ENCODE measurements at regions of chr5 and their contacts with region 1.

Region 1: DNA sequence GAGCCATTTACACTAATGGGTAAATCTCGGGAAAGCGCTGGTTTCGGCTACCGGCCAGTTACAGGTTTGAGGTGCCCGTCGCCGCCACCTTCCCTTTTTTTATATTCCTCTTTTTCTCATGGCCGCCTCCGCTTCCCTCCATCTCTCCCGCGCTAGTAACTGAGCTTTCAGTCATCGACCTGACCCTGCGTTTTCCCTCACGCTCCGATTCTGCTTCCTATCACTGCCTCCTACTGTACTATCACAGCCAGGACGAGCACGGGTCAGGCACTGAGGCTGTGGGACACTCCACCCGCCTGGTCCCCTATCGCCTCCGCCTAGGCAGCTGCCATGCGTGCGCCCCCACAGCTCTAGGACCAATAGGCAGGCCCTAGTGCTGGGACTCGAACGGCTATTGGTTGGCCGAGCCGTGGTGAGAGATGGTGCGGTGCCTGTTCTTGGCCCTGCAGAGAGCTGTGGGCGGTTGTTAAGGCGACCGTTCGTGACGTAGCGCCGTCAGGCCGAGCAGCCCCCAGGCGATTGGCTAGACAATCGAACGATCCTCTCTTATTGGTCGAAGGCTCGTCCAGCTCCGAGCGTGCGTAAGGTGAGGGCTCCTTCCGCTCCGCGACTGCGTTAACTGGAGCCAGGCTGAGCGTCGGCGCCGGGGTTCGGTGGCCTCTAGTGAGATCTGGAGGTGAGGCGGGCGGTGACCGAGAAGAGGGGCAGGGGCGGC is at the start of gene HMGCR:
- H3K4me3 Mint-ChIP-seq: no peak within 1 kb of the TSS
- H3K27ac Mint-ChIP-seq: no peak within 1 kb of the TSS
- H3K4me1 Mint-ChIP-seq: peaks cover 43% of the 10 kb centered on the region
- H3K27me3 Mint-ChIP-seq: no peaks in the 10 kb centered on the region

Region 2: DNA sequence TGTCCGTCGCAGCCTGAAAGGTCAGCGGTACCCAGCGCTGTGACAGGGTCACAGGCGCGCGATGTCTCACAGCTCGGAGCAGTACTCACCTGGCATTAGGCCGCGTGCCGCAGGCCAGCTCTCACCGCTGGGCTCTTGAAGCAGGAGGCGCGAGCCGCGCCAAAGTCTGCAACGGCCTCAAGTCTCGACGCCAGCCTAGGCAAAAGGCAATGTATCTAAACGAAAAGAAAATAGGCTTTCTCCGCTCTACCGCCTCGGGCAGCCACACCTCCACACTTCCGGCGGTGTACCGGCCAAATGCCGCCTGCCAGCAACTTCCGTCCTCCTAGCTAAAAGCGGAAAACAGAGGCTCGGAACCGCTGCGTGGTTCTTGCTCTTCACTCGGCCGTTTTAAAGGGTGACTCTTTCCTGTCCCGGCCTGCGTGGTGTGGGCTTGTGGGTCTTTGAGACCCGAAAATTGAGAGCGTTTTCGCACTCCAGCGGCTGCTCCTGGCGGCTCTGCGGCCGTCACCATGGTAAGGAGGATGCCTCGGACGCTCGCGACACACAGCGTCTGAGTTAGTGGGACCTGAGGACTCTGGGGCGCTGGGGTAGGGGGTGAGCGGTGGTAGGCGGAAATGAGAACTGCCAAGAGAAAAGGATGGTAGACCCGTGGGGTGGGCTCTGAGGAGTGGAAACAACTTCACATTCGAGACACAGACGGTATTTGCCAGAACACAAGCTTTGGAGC is 569.8 kb before region 1 on chr5 and contains the starts of genes GFM2 and NSA2:
- intact Hi-C with region 1: loop called (anchors 10 kb)
- H3K4me3 Mint-ChIP-seq: peak within 1 kb of the TSS; percentile 100
- H3K27ac Mint-ChIP-seq: peak within 1 kb of the TSS; percentile 93
- H3K4me1 Mint-ChIP-seq: peaks cover 30% of the 10 kb centered on the region
- H3K27me3 Mint-ChIP-seq: no peaks in the 10 kb centered on the region

Region 3: GRCh38 chr5:74919487-74919886 is 417.3 kb before region 1 on chr5:
- intact Hi-C with region 1: no loop called
- H3K4me3 Mint-ChIP-seq: no peak overlapping the region
- H3K27ac Mint-ChIP-seq: no peak overlapping the region
- H3K4me1 Mint-ChIP-seq: no peaks in the 10 kb centered on the region
- H3K27me3 Mint-ChIP-seq: peaks cover 2% of the 10 kb centered on the region

Region 4: DNA sequence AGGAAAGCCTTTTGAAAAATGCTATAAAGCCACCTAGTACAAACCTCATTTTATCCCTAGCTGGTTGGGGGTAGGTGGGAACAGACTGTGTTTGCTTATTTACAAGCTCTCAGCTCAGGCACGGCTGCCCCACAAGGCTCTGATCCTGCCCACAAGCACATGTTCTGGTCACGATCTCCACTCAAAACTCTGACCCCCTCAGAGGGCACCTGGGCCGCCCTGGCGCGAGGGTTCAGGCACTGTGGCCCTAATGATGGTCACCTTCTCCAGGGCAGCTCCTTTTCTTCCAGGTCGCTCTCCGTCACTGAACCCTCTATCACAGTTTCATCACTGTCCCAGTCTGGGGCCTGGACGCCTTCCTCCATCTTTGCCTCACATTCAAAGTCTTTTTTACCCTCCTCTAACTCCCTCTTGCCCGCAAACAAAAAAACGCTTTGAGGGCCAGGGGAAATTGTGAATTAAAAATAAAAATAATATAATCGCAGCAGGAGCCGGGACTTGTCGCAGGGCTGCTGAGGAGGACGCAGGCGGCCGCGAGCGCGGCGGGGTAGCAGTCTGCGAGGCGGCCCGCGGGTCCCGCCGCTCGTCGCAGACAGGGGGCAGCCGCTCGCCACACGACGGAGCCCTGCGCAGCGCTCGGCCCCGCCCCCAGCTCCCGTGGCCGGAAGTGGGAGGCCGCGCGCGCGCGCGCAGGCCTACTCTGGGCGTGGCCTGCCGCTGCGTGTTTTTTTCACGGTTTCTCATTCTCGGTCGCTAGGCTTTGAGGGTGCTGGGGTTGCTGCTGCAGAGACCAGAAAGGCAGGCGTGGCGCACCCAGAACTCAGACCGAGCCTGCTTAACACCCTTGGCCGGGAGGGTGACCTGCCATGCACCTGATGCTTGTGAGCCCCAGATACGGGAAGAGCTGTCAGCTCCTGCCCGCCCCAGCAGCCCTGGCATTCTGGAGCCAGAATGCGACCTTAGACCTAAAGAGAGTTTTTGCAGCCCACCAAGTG is 100.2 kb before region 1 on chr5 and contains the start of gene ANKRD31:
- intact Hi-C with region 1: loop called (anchors 1 kb)
- H3K4me3 Mint-ChIP-seq: peak within 1 kb of the TSS; percentile 90
- H3K27ac Mint-ChIP-seq: peak within 1 kb of the TSS; percentile 75
- H3K4me1 Mint-ChIP-seq: peaks cover 5% of the 10 kb centered on the region
- H3K27me3 Mint-ChIP-seq: peaks cover 5% of the 10 kb centered on the region

Region 5: DNA sequence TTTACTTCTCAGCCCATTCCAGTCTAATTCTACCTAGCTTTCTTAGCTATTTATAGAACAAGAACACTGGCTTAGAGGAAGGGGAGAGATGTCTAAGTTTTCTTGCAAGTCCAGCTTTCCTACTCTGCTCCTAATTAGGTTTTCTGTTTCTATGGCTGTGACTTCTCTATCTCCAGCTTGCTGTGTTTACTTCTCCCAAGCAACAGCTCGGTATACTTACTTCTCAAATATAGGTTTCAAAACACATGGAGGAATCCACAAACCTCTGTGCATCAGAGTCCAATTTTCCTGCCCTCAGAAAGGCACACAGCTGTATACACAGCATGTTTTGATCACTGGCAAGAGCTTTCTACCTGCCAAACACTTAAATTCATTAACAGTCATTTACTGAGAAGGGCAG is 17.1 kb before region 1 on chr5:
- intact Hi-C with region 1: loop called (anchors 2 kb)
- H3K4me3 Mint-ChIP-seq: peak overlapping the region; percentile 26
- H3K27ac Mint-ChIP-seq: peak overlapping the region; percentile 79
- H3K4me1 Mint-ChIP-seq: peaks cover 37% of the 10 kb centered on the region
- H3K27me3 Mint-ChIP-seq: no peaks in the 10 kb centered on the region

Region 6: GRCh38 chr5:75511435-75512384 is 174.9 kb after region 1 on chr5 and contains the starts of genes CERT1 and POLK:
- intact Hi-C with region 1: loop called (anchors 5 kb)
- H3K4me3 Mint-ChIP-seq: peak within 1 kb of the TSS; percentile 99
- H3K27ac Mint-ChIP-seq: peak within 1 kb of the TSS; percentile 98
- H3K4me1 Mint-ChIP-seq: peaks cover 40% of the 10 kb centered on the region
- H3K27me3 Mint-ChIP-seq: no peaks in the 10 kb centered on the region

Region 7: GRCh38 chr5:75574791-75575190 is 238.0 kb after region 1 on chr5:
- intact Hi-C with region 1: loop called (anchors 10 kb)
- H3K4me3 Mint-ChIP-seq: no peak overlapping the region
- H3K27ac Mint-ChIP-seq: no peak overlapping the region
- H3K4me1 Mint-ChIP-seq: no peaks in the 10 kb centered on the region
- H3K27me3 Mint-ChIP-seq: no peaks in the 10 kb centered on the region

Region 8: DNA sequence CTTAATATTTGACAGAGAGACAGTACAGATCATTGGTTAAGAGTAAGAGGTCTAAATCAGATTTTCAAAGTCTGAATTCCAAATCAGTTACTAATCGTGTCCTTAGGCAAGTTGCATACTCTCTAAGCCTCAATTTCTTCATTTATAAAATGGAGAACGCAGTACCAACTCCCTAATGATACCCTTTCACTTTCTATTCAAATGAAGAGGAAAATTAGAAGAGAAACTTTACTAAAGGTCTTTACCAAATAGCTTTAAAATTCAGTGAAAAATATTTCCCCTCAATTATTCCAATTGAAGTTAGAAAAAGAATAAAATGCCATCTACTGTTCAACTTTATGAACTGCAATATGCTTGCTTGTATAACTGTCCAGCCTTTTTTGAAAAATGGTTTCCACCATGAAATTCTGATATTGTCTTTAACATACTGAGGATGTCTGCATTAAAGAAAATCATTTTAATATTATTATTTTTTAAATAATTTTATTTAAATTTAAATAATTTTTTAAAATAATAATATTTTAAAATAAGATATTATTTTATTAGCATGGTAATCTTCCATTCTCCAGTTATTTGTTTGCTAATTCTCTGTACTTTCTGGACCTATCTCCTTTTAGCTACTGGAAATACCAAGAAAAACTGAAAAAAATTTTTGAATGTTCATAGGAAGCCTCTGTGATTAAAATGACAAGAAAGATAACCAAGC is 344.5 kb after region 1 on chr5:
- intact Hi-C with region 1: loop called (anchors 10 kb)
- H3K4me3 Mint-ChIP-seq: no peak overlapping the region
- H3K27ac Mint-ChIP-seq: no peak overlapping the region
- H3K4me1 Mint-ChIP-seq: peaks cover 9% of the 10 kb centered on the region
- H3K27me3 Mint-ChIP-seq: no peaks in the 10 kb centered on the region

Measured in dendritic cell treated with granulocyte-macrophage colony-stimulating factor and Interleukin-4, amounts not matched to agents 40 ng/mL and 50 ng/mL, for 4 days (primary cell).